ENCODE measurements at regions of chr1 and their contacts with region 1.

Region 1: GRCh38 chr1:109397538-109398342 is at the start of gene SORT1:
- DNase-seq: peak; percentile 89
- ATAC-seq: peak; percentile 92 to 96
- total RNA-seq, gene SORT1: 139 to 157 TPM

Region 2: GRCh38 chr1:109263597-109264398 is 133.9 kb before region 1 on chr1:
- intact Hi-C with region 1: loop called in 1 of 2 experiments (anchors 5 kb)
- DNase-seq: peak; percentile 87
- ATAC-seq: peak; percentile 84 to 89

Region 3: GRCh38 chr1:109277434-109278204 is 120.1 kb before region 1 on chr1:
- intact Hi-C with region 1: loop called (anchors 2 to 5 kb)
- DNase-seq: peak; percentile 80
- ATAC-seq: peak; percentile 64 to 75

Region 4: DNA sequence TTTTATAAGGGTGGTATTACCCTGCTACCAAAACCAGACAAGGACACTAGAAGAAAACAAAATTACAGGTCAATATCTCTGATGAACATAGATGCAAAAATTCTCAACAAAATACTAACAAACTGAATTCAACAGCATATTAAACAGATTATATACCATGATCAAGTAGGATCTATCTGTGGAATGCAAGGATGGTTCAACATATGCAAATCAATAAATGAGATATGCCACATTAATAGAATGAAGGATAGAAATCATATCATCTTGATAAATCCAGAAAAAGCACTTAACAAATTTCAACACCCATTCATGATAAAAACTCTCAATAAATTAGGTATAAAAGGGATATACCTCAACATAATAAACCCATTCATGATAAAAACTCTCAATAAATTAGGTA is 66.6 kb before region 1 on chr1:
- intact Hi-C with region 1: no loop called
- DNase-seq: no peak
- ATAC-seq: no peak

Region 5: GRCh38 chr1:109361649-109362048 is 36.1 kb before region 1 on chr1:
- intact Hi-C with region 1: loop called in 1 of 2 experiments (anchors 5 kb)
- DNase-seq: no peak
- ATAC-seq: peak in 1 of 2 donors; percentile 56